Right cardiac atrium (tissue), 5 donors: ENCODE measurements at regions of chr5 and their contacts with region 1.

Region 1: GRCh38 chr5:8993031-8993430 is 552.8 kb downstream of the SEMA5A start:
- DNase-seq: no peak
- ATAC-seq: no peak
- H3K4me3 ChIP-seq: no peak overlapping the region
- H3K27ac ChIP-seq: no peak overlapping the region
- H3K4me1 ChIP-seq: no peaks in the 10 kb centered on the region
- H3K27me3 ChIP-seq: no peaks in the 10 kb centered on the region

Region 2: DNA sequence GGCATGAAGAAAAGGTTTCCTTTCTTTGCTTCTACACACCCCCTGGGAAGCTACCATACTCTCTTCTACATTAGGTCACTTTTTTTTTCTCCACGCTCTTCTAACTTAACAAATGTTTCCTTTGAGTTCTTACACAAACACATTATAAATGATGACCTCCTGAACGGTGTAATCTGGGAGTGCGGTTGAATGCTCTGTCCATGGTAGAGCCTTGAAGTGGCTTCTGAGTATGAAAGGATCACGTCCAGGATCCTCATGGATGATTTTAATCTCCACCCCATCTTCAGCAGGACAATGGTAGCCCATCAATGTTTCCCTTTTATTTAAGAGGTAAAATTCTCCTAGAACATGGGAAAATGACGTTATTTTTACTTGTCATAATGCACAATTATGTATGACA is 34.4 kb before region 1 on chr5:
- intact Hi-C with region 1: loop called in 1 of 4 experiments (anchors 2 kb)
- DNase-seq: no peak
- ATAC-seq: no peak
- H3K4me3 ChIP-seq: no peak overlapping the region
- H3K27ac ChIP-seq: no peak overlapping the region
- H3K4me1 ChIP-seq: no peaks in the 10 kb centered on the region
- H3K27me3 ChIP-seq: no peaks in the 10 kb centered on the region